Caco-2 (cell line): ENCODE measurements at regions of chr13 and their contacts with region 1.

Region 1: GRCh38 chr13:20828539-20829364 is 55.0 kb upstream of the EEF1AKMT1 start:
- DNase-seq: peak in 1 of 2 experiments; percentile 61
- H3K4me3 ChIP-seq: no peak overlapping the region
- H3K4me3 Mint-ChIP-seq: no peak overlapping the region
- H3K27ac Mint-ChIP-seq: no peak overlapping the region
- H3K4me1 ChIP-seq: peaks cover 5% of the 10 kb centered on the region; the same call in 1 of the 2 replicates
- H3K4me1 Mint-ChIP-seq: peaks cover 12% of the 10 kb centered on the region
- H3K27me3 ChIP-seq: no peaks in the 10 kb centered on the region
- H3K27me3 Mint-ChIP-seq: no peaks in the 10 kb centered on the region
- CTCF ChIP-seq: peak; percentile 74 to 83

Region 2: GRCh38 chr13:20534038-20534608 is 294.6 kb before region 1 on chr13:
- CTCF ChIA-PET with region 1: no interaction called
- POLR2A ChIA-PET with region 1: no interaction called
- intact Hi-C with region 1: no loop called
- DNase-seq: peak in 1 of 2 experiments; percentile 27
- H3K4me3 ChIP-seq: no peak overlapping the region
- H3K4me3 Mint-ChIP-seq: no peak overlapping the region
- H3K27ac Mint-ChIP-seq: no peak overlapping the region
- H3K4me1 ChIP-seq: no peaks in the 10 kb centered on the region
- H3K4me1 Mint-ChIP-seq: no peaks in the 10 kb centered on the region
- H3K27me3 ChIP-seq: no peaks in the 10 kb centered on the region
- H3K27me3 Mint-ChIP-seq: no peaks in the 10 kb centered on the region
- CTCF ChIP-seq: no peak

Region 3: GRCh38 chr13:20703780-20704445 is 124.8 kb before region 1 on chr13:
- CTCF ChIA-PET with region 1: no interaction called
- POLR2A ChIA-PET with region 1: no interaction called
- intact Hi-C with region 1: loop called (anchors 1 kb)
- DNase-seq: peak; percentile 94 to 97
- H3K4me3 ChIP-seq: peak overlapping the region; percentile 92
- H3K4me3 Mint-ChIP-seq: peak overlapping the region; percentile 92
- H3K27ac Mint-ChIP-seq: no peak overlapping the region
- H3K4me1 ChIP-seq: peaks cover 15% of the 10 kb centered on the region
- H3K4me1 Mint-ChIP-seq: peaks cover 10% of the 10 kb centered on the region
- H3K27me3 ChIP-seq: no peaks in the 10 kb centered on the region
- H3K27me3 Mint-ChIP-seq: no peaks in the 10 kb centered on the region
- CTCF ChIP-seq: peak; percentile 56 to 74

Region 4: GRCh38 chr13:20713751-20714150 is 115.0 kb before region 1 on chr13:
- CTCF ChIA-PET with region 1: no interaction called
- POLR2A ChIA-PET with region 1: no interaction called
- intact Hi-C with region 1: loop called (anchors 1 kb)
- DNase-seq: no peak
- H3K4me3 ChIP-seq: no peak overlapping the region
- H3K4me3 Mint-ChIP-seq: no peak overlapping the region
- H3K27ac Mint-ChIP-seq: no peak overlapping the region
- H3K4me1 ChIP-seq: peaks cover 8% of the 10 kb centered on the region; the same call in 1 of the 2 replicates
- H3K4me1 Mint-ChIP-seq: no peaks in the 10 kb centered on the region
- H3K27me3 ChIP-seq: no peaks in the 10 kb centered on the region
- H3K27me3 Mint-ChIP-seq: no peaks in the 10 kb centered on the region
- CTCF ChIP-seq: no peak

Region 5: DNA sequence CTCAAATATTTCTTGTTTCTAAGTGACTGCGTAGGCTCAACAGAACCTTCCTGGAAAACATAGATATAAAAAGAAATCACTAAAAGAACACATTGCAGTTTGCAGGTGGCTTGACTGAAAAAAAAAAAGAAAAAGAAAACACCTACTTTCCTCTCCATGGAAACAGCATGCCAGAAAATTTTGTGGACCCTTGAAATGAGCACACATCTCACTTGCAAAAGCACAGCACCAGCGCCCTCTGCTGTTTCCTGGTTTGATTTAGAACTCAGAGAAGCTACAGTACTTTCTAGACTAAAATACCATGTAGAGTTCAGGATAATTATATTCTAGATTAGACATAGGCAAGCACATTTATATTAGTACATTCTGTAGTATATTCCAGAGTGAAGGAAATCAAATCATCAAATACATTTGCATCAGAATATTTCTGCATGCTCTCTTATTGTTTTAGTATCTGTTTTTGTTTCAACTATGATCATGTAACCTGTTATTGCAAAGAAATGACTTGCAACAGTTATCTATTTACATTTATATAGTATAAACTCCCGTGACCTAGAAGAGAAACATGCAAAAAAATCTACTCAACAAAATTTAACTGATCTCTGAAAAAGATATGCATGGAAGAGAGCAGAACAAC is 96.1 kb after region 1 on chr13:
- CTCF ChIA-PET with region 1: interaction called, 4 read pairs
- POLR2A ChIA-PET with region 1: interaction called, 3 read pairs
- intact Hi-C with region 1: loop called (anchors 2 kb)
- DNase-seq: peak; percentile 87 to 88
- H3K4me3 ChIP-seq: no peak overlapping the region
- H3K4me3 Mint-ChIP-seq: no peak overlapping the region
- H3K27ac Mint-ChIP-seq: no peak overlapping the region
- H3K4me1 ChIP-seq: no peaks in the 10 kb centered on the region
- H3K4me1 Mint-ChIP-seq: peaks cover 9% of the 10 kb centered on the region
- H3K27me3 ChIP-seq: no peaks in the 10 kb centered on the region
- H3K27me3 Mint-ChIP-seq: no peaks in the 10 kb centered on the region
- CTCF ChIP-seq: peak; percentile 78 to 91